ENCODE measurements at regions of chr5 and their contacts with region 1.

Region 1: DNA sequence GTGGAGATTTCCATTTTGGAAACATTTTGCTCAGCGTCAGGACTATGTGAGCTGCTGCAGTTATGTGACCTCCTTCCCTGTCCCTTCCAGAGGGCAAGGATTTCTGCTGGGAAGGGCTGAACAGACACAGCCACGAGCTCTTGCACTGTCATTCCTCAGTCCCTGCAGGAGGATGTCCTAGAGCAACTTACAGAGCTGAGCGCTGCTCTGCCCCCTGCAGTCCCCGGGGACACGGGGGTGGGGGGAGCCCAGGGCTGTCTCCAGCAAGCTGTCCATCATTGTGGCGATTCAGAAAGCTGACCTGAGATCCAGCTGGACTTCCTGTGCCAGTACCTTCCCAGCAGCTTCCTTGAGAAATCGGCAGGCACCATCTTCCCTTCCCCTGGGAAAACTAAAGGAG is 28.0 kb upstream of the MAP1B start:
- DNase-seq: no peak
- ATAC-seq: no peak

Region 2: DNA sequence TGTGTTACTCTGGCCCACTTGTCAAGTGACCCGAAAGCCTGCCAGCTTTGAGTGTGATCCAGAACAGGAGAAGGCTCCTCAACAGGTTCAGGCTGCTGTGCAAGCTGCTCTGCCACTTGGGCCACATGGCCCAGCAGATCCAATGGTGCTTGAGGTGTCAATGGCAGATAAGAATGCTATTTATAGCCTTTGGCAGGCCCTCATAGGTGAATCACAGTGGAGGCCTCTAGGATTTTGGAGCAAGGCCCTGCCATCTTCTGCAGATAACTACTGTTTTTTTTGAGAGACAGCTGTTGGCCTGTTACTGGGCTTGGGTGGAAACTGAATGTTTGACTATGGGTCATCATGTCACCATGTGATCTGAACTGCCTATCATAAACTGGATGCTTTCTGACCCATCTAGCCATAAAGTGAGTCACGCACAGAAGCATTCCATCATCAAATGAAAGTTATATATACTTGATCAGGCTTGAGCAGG is 179.4 kb before region 1 on chr5:
- intact Hi-C with region 1: loop called (anchors 5 kb)
- DNase-seq: no peak
- ATAC-seq: no peak

Region 3: GRCh38 chr5:72436796-72437471 is 357.6 kb after region 1 on chr5:
- intact Hi-C with region 1: no loop called
- DNase-seq: no peak
- ATAC-seq: no peak

Region 4: DNA sequence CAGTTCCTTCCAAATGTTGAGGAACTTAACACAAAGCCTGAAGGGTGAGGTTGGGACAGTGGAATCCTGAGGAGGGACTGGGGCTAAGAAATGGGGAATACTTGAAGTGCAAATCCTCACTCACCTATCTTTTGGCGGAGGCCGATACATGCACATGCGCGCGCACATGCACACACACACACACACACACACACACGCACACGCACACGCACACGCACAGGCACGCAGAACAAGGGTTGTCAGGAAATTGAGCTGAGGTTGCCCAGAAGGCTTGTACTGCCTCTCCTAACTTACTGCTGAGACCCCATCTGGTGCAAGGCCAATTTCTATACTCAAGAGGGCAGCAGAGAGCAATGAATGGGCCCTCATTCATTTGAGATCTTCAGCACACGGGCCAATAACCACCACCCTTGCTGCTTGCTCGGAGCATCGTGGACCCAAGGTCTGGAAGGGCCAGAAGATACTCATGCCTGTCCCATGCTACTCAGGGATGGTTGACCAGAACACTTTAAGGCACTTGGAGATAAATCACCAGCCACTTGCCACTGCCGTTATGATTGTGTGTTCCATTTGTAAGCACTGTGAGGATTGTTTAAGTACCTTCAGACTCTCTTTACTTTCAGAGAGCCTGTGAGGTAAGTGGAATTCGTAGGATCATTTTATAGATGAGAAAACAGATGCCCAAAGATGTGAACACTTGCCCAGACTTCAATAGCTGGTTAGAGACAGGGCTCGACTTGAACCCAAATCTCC is 1440.4 kb after region 1 on chr5:
- intact Hi-C with region 1: no loop called
- DNase-seq: peak; percentile 70
- ATAC-seq: peak; percentile 90

Measured in sciatic nerve (tissue), 2 donors.